ENCODE measurements at regions of chr2 and their contacts with region 1.

Region 1: DNA sequence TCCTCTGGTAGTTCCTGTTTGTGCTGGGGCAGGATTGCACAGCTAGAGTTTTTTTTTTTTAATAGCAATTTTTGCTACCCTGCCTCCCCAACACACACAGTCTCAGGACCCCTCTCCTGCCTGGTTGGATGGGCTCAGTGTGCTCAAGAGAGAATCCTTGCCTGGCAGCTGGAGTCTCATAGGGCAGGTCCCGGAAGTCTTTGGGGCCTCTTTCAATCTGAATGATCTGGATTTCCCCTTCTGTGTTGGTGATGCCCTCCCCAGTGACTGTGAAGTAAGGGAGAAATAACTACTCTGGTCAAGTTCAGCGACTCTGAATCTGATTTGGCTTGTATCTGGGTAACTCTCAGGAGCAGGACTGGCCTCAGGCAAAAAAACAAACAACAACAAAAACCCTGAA is 220.6 kb upstream of the LRRTM1 start:
- DNase-seq: peak; percentile 83
- ATAC-seq: peak; percentile 77
- H3K4me3 ChIP-seq: 0 out of 2 replicates have a peak overlapping the region, but pooled peaks have one; percentile 19
- H3K27ac ChIP-seq: peak overlapping the region; percentile 92
- H3K4me1 ChIP-seq: peaks cover 48% of the 10 kb centered on the region
- H3K27me3 ChIP-seq: no peaks in the 10 kb centered on the region
- CTCF ChIP-seq: no peak
- EP300 ChIP-seq: peak; percentile 57 to 76; a peak in 3 of 4 replicates
- POLR2A ChIP-seq: 0 out of 2 replicates have a peak, but pooled peaks have one; percentile 23
- RAD21 ChIP-seq: no peak

Region 2: DNA sequence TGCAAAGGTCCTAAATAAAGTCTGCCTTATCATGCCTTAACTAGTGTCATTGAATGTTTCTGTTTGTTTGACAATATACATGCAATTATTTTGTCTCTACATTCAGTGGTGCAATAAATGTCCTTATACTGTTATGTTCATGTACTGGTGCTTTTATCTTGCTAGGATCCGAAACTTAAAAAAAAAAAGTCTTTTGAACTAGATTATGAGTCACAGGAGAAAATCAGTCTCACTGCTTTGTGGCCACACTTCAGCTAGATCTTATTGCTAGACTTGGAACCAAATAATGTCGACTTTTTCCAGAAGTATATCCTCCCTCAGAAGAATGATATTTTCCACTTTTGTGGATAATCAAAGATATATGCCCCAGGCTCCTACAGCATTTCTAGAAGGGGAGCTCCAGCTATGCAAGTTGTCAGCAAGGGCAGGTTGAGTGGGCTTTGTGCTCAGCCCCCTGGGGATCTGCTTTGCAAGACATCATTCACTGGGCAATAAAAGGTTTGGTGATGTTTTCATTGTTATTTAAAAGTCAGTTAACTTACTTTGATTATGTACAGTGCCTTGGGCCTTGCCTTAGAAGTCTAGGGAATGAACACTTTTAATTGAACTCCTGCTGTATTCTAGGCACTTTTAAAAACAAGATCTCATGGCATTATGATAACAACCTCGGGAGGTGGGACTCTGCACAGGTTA is 63.5 kb before region 1 on chr2:
- CTCF ChIA-PET with region 1: interaction called, 7 read pairs
- POLR2A ChIA-PET with region 1: interaction called, 56 read pairs
- RAD21 ChIA-PET with region 1: interaction called, 48 read pairs
- SMC1A ChIA-PET with region 1: interaction called, 38 read pairs
- in situ Hi-C with region 1: no loop called
- intact Hi-C with region 1: loop called (anchors 2 kb)
- DNase-seq: no peak
- ATAC-seq: peak; percentile 61
- H3K4me3 ChIP-seq: no peak overlapping the region; the same call in 1 of the 2 replicates
- H3K27ac ChIP-seq: 0 out of 2 replicates have a peak overlapping the region, but pooled peaks have one; percentile 4
- H3K4me1 ChIP-seq: peaks cover 3% of the 10 kb centered on the region; the same call in 1 of the 2 replicates
- H3K27me3 ChIP-seq: no peaks in the 10 kb centered on the region; a peak in 1 of 4 replicates
- CTCF ChIP-seq: no peak
- EP300 ChIP-seq: no peak
- POLR2A ChIP-seq: no peak
- RAD21 ChIP-seq: no peak

Region 3: DNA sequence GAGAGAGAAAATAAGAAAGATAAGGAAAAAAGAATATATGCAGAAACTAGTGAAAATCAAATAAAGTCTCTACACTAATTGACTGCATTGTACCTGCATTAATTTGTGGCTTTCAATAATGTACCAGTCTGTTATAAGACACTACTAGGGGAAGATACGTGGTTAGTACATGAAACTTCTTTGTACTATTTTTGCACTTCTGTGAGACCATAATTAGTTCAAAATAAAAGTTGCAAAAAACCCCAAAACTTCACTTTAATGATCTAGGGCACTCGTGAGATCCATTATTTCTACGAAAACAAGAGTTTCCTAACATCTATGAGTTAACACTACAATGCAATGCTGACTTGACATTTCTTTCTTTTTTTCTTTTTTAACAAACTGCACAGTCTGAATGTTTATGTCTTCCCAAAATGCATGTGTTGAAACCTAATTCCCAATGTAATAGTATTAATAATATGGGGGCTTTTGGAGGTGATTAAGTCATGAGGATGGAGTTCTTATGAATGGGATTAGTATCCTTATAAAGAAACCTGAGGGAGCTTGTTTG is 57.8 kb before region 1 on chr2:
- CTCF ChIA-PET with region 1: interaction called, 7 read pairs
- POLR2A ChIA-PET with region 1: interaction called, 56 read pairs
- RAD21 ChIA-PET with region 1: interaction called, 48 read pairs
- SMC1A ChIA-PET with region 1: interaction called, 38 read pairs
- in situ Hi-C with region 1: no loop called
- intact Hi-C with region 1: loop called (anchors 2 kb)
- DNase-seq: no peak
- ATAC-seq: peak; percentile 35
- H3K4me3 ChIP-seq: no peak overlapping the region
- H3K27ac ChIP-seq: peak overlapping the region; percentile 44
- H3K4me1 ChIP-seq: peaks cover 5% of the 10 kb centered on the region
- H3K27me3 ChIP-seq: no peaks in the 10 kb centered on the region
- CTCF ChIP-seq: no peak
- EP300 ChIP-seq: peak in 1 of 2 experiments; percentile 66; a peak in 2 of 4 replicates
- POLR2A ChIP-seq: no peak
- RAD21 ChIP-seq: no peak

Region 4: GRCh38 chr2:80473796-80474195 is 51.4 kb before region 1 on chr2:
- CTCF ChIA-PET with region 1: interaction called, 4 read pairs
- POLR2A ChIA-PET with region 1: interaction called, 7 read pairs
- RAD21 ChIA-PET with region 1: interaction called, 18 read pairs
- SMC1A ChIA-PET with region 1: interaction called, 20 read pairs
- in situ Hi-C with region 1: no loop called
- intact Hi-C with region 1: no loop called
- DNase-seq: no peak
- ATAC-seq: 0 out of 3 replicates have a peak, but pooled peaks have one; percentile 11
- H3K4me3 ChIP-seq: no peak overlapping the region
- H3K27ac ChIP-seq: no peak overlapping the region; the same call in 1 of the 2 replicates
- H3K4me1 ChIP-seq: peaks cover 8% of the 10 kb centered on the region
- H3K27me3 ChIP-seq: no peaks in the 10 kb centered on the region
- CTCF ChIP-seq: no peak
- EP300 ChIP-seq: no peak
- POLR2A ChIP-seq: no peak
- RAD21 ChIP-seq: no peak

Region 5: DNA sequence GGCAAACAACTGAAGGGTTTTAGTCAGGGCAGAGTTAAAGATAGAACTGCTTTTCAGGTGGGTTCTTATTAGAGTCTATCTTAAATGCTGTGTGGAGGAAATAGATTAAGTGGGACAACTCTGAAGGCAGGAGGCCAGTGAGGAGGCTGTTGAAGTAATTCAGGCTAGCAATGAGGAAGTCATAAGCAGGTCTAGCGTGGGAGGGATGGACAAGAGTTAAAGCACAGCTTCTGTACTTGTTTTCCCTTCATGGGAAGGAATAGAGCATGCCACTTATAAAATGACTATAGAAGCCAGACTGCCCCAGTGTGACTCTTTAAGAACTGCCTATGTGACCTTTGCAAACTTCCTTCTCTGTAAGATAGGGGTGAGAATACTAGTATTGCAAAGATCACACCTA is 18.6 kb before region 1 on chr2:
- CTCF ChIA-PET with region 1: interaction called, 243 read pairs
- POLR2A ChIA-PET with region 1: interaction called, 36 read pairs
- RAD21 ChIA-PET with region 1: interaction called, 276 read pairs
- SMC1A ChIA-PET with region 1: interaction called, 360 read pairs
- in situ Hi-C with region 1: no loop called
- intact Hi-C with region 1: no loop called
- DNase-seq: no peak
- ATAC-seq: peak; percentile 62
- H3K4me3 ChIP-seq: no peak overlapping the region
- H3K27ac ChIP-seq: no peak overlapping the region
- H3K4me1 ChIP-seq: no peaks in the 10 kb centered on the region
- H3K27me3 ChIP-seq: no peaks in the 10 kb centered on the region
- CTCF ChIP-seq: no peak
- EP300 ChIP-seq: no peak
- POLR2A ChIP-seq: no peak
- RAD21 ChIP-seq: no peak